Right ventricle myocardium superior (tissue), 1 donor: ENCODE measurements at regions of chr3 and their contacts with region 1.

Region 1: DNA sequence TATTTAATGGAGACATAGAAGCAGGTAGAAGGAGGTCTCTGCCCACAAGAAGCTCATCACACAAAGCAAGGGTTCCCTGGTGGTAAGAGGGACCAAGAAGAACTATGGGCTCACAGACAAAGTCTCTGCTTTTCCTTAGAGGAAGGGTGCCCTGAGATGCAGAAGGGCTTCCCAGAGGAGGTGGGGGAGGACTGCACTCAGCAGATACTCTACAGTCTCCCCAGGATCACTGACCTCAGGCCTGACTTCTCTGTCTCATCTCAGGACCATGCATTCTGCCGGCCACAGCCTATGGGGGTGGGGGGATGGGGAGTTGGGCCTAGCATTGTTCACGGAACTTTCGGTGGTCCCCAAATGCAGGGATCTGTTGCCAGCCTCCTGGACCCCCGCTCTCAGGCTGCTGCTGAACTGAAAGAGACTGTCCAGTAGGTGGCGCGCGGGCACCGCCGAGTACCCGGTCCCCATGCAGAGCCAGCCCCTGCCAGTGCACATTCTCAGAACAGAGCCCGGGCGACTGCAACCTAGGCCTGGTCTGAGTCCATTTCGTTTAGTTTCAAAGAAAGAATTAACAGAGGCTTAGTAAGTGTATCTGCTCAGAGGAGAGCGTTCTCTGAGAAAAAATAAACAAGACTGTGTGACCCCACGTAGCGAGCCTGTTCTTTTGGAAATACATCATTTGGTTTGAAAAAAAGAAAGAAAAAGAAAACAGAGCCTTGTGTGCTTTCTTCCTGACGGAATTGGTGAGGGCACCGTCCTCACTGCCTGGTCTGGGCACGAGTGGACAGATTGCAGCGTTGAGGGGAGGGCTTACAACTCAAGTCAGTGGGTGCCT is 74.1 kb downstream of the LRTM1 start:
- DNase-seq: peak; percentile 87
- ATAC-seq: peak; percentile 95

Region 2: DNA sequence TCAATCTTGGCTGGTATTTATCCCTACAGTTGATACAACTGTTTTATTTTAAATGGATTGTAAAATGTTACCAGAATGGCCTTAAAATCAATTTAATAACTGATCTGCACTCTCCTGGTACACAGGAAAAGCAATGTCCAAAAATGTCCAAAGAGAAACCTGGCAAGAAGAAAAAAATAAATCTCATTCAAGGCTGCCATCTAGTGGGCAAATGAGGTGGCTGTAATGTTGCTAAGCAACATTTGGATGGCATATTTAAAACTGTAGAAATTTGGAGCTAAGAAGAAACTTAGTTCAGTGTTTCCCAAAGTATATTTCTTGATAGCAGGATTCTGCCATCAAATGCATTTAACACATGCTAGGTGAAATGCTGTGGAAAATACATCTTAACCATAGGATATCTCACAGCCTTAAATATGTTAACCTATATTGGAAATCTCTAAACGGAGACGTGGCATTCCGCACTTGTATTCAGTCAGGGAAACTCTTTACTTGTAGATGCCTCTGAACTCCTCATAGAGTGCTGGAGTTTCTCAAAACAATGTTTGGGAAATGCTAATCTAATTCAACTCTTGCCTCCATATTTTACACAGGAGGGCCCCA is 1397.7 kb after region 1 on chr3:
- intact Hi-C with region 1: loop called (anchors 10 kb)
- DNase-seq: no peak
- ATAC-seq: no peak